Naive thymus-derived CD4-positive, alpha-beta T cell (primary cell): ENCODE measurements at regions of chr18 and their contacts with region 1.

Region 1: DNA sequence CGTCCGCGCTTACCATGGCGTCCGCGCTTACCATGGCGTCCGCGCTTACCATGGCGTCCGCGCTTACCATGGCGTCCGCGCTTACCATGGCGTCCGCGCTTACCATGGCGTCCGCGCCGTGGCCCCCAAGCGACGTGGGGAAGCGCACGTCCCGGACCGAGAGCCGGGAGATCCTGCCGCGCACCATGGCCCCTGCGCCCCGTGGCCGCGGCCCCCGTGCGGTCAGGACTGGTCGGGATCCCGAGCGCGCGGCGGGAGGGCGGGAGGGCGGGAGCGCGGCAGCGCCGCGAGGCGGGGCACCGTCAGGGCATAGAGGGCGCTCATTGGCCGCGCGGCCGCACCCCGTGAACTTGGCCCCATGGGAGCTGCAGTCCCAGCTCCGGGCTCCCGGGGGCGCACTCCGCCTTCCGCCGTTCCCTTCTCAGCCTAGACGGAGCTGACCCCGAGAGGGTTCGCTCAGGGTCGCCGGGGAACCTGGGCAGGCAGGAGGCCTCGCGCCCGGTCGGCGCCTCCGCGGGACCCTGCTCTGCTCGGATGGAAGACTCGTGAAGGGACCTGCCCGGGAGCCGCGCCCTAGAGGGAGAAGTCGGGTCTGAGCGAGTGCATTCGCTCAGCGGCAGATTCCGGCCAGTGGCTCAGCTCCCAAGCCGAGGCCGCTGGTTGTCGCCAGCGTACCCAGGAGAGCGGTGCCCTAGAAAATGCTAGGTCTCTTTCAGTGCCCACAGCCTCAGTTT is at the start of gene ENOSF1:
- DNase-seq: peak; percentile 68 to 93 (median 80)
- ATAC-seq: peak; percentile 94
- H3K4me3 ChIP-seq: peak within 1 kb of the TSS; percentile 95
- H3K4me3 Mint-ChIP-seq: peak within 1 kb of the TSS; percentile 84 to 98 (median 92)
- H3K27ac ChIP-seq: peak within 1 kb of the TSS; percentile 76
- H3K27ac Mint-ChIP-seq: peak within 1 kb of the TSS; percentile 88 to 99 (median 98)
- H3K4me1 ChIP-seq: peaks cover 8 to 12% of the 10 kb centered on the region in 2 donors
- H3K4me1 Mint-ChIP-seq: peaks cover 20 to 39% (median 36%) of the 10 kb centered on the region in 7 donors
- H3K27me3 ChIP-seq: no peaks in the 10 kb centered on the region
- H3K27me3 Mint-ChIP-seq: no peaks in the 10 kb centered on the region
- total RNA-seq, gene ENOSF1: 80.1 to 137 (median 90.0) TPM

Region 2: GRCh38 chr18:111292-112014 is 601.1 kb before region 1 on chr18:
- CTCF ChIA-PET with region 1: no interaction called
- POLR2A ChIA-PET with region 1: no interaction called
- intact Hi-C with region 1: loop called (anchors 5 kb)
- DNase-seq: peak; percentile 60 to 77 (median 75)
- ATAC-seq: no peak
- H3K4me3 ChIP-seq: peak overlapping the region; percentile 36
- H3K4me3 Mint-ChIP-seq: peak overlapping the region; percentile 79 to 91 (median 89)
- H3K27ac ChIP-seq: peak overlapping the region; percentile 82
- H3K27ac Mint-ChIP-seq: peak overlapping the region; percentile 85 to 99 (median 90)
- H3K4me1 ChIP-seq: peaks cover 0 to 5% of the 10 kb centered on the region in 2 donors
- H3K4me1 Mint-ChIP-seq: peaks cover 4 to 14% (median 7%) of the 10 kb centered on the region in 7 donors
- H3K27me3 ChIP-seq: no peaks in the 10 kb centered on the region
- H3K27me3 Mint-ChIP-seq: peaks cover 0 to 3% (median 0%) of the 10 kb centered on the region in 5 donors

Region 3: DNA sequence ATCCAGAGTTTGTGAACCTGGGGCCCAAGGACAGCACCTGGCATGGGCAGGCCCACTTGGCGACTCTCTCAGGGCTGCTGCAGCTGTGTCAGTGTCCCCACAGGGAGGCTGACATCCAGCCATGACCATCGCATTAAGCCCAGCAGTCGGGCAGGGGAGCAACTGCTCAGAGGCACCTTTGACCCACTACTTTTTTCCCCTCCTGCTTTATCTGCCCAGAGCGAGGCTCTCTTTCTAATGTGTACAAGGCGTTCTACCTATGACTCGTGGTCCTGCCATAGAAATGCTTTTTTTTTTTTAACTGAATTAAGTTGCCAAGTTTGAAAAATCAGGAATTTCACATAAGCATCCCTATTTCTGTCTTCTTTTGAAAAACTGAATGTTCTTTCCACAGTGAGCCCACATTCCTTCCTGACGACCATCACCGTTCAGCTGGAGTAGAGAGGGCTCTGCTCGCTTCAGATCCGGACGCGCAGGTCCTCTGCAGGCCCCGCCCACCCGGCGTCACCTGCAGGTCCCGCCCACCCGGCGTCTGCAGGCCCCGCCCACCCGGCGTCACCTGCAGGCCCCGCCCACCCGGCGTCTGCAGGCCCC is 116.2 kb before region 1 on chr18:
- CTCF ChIA-PET with region 1: no interaction called
- POLR2A ChIA-PET with region 1: no interaction called
- intact Hi-C with region 1: loop called (anchors 2 kb)
- DNase-seq: peak in 1 of 9 donors; percentile 52
- ATAC-seq: peak; percentile 75
- H3K4me3 ChIP-seq: no peak overlapping the region
- H3K4me3 Mint-ChIP-seq: peak overlapping the region in 8 of 10 donors; percentile 55 to 64 (median 56)
- H3K27ac ChIP-seq: peak overlapping the region; percentile 33
- H3K27ac Mint-ChIP-seq: peak overlapping the region in 7 of 9 donors; percentile 8 to 83 (median 73)
- H3K4me1 ChIP-seq: peaks cover 4 to 5% of the 10 kb centered on the region in 2 donors
- H3K4me1 Mint-ChIP-seq: peaks cover 0 to 17% (median 12%) of the 10 kb centered on the region in 7 donors
- H3K27me3 ChIP-seq: peaks cover 0 to 5% of the 10 kb centered on the region in 2 donors
- H3K27me3 Mint-ChIP-seq: peaks cover 21 to 48% (median 34%) of the 10 kb centered on the region in 5 donors

Region 4: GRCh38 chr18:650428-650858 is 62.1 kb before region 1 on chr18:
- CTCF ChIA-PET with region 1: no interaction called
- POLR2A ChIA-PET with region 1: no interaction called
- intact Hi-C with region 1: no loop called
- DNase-seq: peak in 1 of 9 donors; percentile 20
- ATAC-seq: peak; percentile 61
- H3K4me3 ChIP-seq: no peak overlapping the region
- H3K4me3 Mint-ChIP-seq: peak overlapping the region in 5 of 10 donors; percentile 10 to 79 (median 30)
- H3K27ac ChIP-seq: no peak overlapping the region
- H3K27ac Mint-ChIP-seq: peak overlapping the region in 2 of 9 donors; percentile 82
- H3K4me1 ChIP-seq: no peaks in the 10 kb centered on the region
- H3K4me1 Mint-ChIP-seq: peaks cover 3 to 14% (median 6%) of the 10 kb centered on the region in 7 donors
- H3K27me3 ChIP-seq: no peaks in the 10 kb centered on the region
- H3K27me3 Mint-ChIP-seq: peaks cover 0 to 25% (median 19%) of the 10 kb centered on the region in 5 donors

Region 5: GRCh38 chr18:681985-682384 is 30.6 kb before region 1 on chr18:
- CTCF ChIA-PET with region 1: interaction called, 3 read pairs
- POLR2A ChIA-PET with region 1: interaction called, 3 read pairs
- intact Hi-C with region 1: loop called (anchors 1 kb)
- DNase-seq: peak in 8 of 9 donors; percentile 46 to 74 (median 60)
- ATAC-seq: peak; percentile 93
- H3K4me3 ChIP-seq: no peak overlapping the region
- H3K4me3 Mint-ChIP-seq: peak overlapping the region in 9 of 10 donors; percentile 8 to 57 (median 43)
- H3K27ac ChIP-seq: no peak overlapping the region
- H3K27ac Mint-ChIP-seq: peak overlapping the region in 7 of 9 donors; percentile 17 to 90 (median 84)
- H3K4me1 ChIP-seq: peaks cover 10 to 11% of the 10 kb centered on the region in 2 donors
- H3K4me1 Mint-ChIP-seq: peaks cover 10 to 28% (median 16%) of the 10 kb centered on the region in 7 donors
- H3K27me3 ChIP-seq: no peaks in the 10 kb centered on the region
- H3K27me3 Mint-ChIP-seq: no peaks in the 10 kb centered on the region

Region 6: DNA sequence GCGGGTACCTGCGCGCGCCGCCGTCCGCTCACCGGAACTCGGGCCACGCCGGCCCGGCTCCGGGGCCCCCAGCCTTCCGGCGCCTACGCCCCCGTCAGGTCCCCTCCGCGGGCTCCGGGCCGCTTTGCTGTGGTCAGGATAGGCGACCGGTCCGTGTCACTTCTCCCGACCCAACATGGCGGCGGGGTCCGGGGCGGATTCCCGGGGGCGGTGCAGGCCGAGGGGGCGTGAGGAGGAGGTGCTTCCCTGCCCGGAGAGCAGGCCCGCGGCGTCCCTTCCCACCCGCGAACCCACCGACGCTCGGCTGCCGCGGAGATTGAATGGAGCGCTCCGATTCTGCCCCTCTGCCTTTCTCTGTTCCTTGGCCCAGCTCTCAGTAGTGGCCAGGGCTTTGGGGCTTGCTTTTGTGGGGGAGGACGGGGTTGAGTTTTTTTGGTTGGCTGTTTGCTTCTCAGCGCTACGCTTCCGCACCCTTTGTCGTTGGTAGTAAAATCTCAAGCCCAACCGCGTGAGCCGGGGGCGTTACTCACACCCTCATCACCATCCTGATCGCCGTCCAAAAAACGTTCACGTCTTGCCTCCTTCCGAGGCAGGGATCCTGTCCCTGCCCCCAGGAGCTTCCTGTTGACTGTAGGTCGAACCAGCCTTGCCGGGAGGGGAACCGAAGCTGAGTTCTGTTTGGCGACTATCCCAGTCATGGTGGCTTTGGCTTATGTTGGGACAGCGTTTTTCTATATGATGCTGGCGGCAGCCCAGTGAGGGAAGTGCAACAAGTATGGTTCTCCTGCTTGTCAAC is 100.0 kb after region 1 on chr18:
- CTCF ChIA-PET with region 1: no interaction called
- POLR2A ChIA-PET with region 1: interaction called, 8 read pairs
- intact Hi-C with region 1: loop called (anchors 1 kb)
- DNase-seq: peak; percentile 70 to 86 (median 84)
- ATAC-seq: peak; percentile 81
- H3K4me3 ChIP-seq: peak overlapping the region; percentile 60
- H3K4me3 Mint-ChIP-seq: peak overlapping the region; percentile 90 to 98 (median 95)
- H3K27ac ChIP-seq: peak overlapping the region; percentile 94
- H3K27ac Mint-ChIP-seq: peak overlapping the region; percentile 94 to 100 (median 98)
- H3K4me1 ChIP-seq: peaks cover 31 to 36% of the 10 kb centered on the region in 2 donors
- H3K4me1 Mint-ChIP-seq: peaks cover 36 to 78% (median 71%) of the 10 kb centered on the region in 7 donors
- H3K27me3 ChIP-seq: no peaks in the 10 kb centered on the region
- H3K27me3 Mint-ChIP-seq: peaks cover 0 to 6% (median 0%) of the 10 kb centered on the region in 5 donors

Region 7: DNA sequence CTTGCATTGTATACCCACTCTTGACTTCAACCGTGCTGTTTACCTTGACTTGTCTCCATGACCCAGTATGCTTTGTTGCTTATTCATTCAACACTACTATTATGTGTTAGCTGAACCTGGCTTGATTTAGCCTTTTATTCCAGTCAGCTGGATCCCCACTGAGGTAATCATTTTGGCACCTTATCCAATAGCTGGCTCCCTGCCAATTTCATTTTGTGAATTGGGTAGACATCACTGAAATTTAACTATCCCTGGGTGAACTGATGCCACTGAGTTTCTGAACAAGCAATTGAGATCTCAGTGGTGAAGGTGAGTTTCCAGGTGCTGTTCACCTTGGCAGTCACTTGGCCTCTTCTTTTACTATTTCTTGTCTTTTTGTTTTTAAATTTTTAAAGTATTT is 776.4 kb after region 1 on chr18:
- CTCF ChIA-PET with region 1: no interaction called
- POLR2A ChIA-PET with region 1: no interaction called
- intact Hi-C with region 1: no loop called
- DNase-seq: no peak
- ATAC-seq: no peak
- H3K4me3 ChIP-seq: no peak overlapping the region
- H3K4me3 Mint-ChIP-seq: no peak overlapping the region
- H3K27ac ChIP-seq: no peak overlapping the region
- H3K27ac Mint-ChIP-seq: no peak overlapping the region
- H3K4me1 ChIP-seq: no peaks in the 10 kb centered on the region
- H3K4me1 Mint-ChIP-seq: no peaks in the 10 kb centered on the region
- H3K27me3 ChIP-seq: no peaks in the 10 kb centered on the region
- H3K27me3 Mint-ChIP-seq: no peaks in the 10 kb centered on the region

Region 8: GRCh38 chr18:2571200-2572143 is 1858.9 kb after region 1 on chr18 and contains the starts of genes METTL4 and NDC80:
- CTCF ChIA-PET with region 1: no interaction called
- POLR2A ChIA-PET with region 1: no interaction called
- intact Hi-C with region 1: loop called in 1 of 2 experiments (anchors 10 kb)
- DNase-seq: peak; percentile 70 to 90 (median 82)
- ATAC-seq: peak; percentile 87
- H3K4me3 ChIP-seq: peak within 1 kb of the TSS; percentile 88
- H3K4me3 Mint-ChIP-seq: peak within 1 kb of the TSS; percentile 96 to 100 (median 99)
- H3K27ac ChIP-seq: peak within 1 kb of the TSS; percentile 97
- H3K27ac Mint-ChIP-seq: peak within 1 kb of the TSS; percentile 98 to 100 (median 100)
- H3K4me1 ChIP-seq: peaks cover 10 to 13% of the 10 kb centered on the region in 2 donors
- H3K4me1 Mint-ChIP-seq: peaks cover 38 to 63% (median 59%) of the 10 kb centered on the region in 7 donors
- H3K27me3 ChIP-seq: no peaks in the 10 kb centered on the region
- H3K27me3 Mint-ChIP-seq: no peaks in the 10 kb centered on the region
- total RNA-seq, gene METTL4: 13.8 to 32.5 (median 22.8) TPM
- total RNA-seq, gene NDC80: 2.4 to 53.6 (median 2.7) TPM